ENCODE measurements at regions of chr12 and their contacts with region 1.

Region 1: GRCh38 chr12:62181481-62181880 is 78.7 kb upstream of the USP15 start:
- DNase-seq: no peak
- H3K4me3 ChIP-seq: no peak overlapping the region
- H3K27ac ChIP-seq: no peak overlapping the region
- H3K4me1 ChIP-seq: no peaks in the 10 kb centered on the region
- H3K27me3 ChIP-seq: no peaks in the 10 kb centered on the region
- CTCF ChIP-seq: no peak
- EP300 ChIP-seq: no peak
- RAD21 ChIP-seq: no peak

Region 2: DNA sequence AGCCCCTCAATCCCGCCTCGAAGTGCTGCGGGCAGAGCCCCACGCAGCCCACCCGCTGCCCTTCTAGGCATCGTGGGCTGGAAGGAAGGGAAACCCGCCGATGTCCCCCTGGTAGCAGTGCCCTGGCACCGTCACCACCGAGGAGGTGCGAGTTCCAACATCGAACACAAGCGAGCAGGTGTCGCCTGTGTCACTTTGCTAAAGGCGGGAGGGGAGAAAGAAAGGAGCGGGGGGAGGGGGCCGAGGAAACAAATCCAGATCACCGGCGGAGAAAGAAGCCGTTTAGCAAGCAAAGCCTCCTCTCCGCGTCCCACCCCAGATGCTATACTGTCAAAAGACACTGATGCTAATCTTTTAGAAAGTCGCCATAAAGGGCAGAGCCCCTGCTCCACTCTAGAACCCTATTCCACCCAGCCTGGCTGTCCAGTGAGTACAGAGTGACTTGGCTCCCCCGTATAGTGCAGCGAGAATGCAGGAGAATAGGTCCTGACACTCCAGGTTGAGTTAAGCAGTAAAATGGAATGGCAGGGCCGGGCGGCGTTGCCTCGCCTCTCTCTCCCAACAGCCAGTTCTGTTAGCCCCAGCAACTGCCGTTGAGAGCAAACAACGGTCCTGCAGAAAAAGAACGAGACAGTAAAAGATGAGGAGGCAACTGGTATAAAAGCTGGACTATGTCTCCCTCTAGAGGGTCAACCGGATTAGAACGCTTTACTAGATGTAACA is 10.9 kb after region 1 on chr12:
- CTCF ChIA-PET with region 1: interaction called, 12 read pairs
- POLR2A ChIA-PET with region 1: no interaction called
- DNase-seq: peak; percentile 77
- H3K4me3 ChIP-seq: peak overlapping the region; percentile 33 to 54
- H3K27ac ChIP-seq: no peak overlapping the region
- H3K4me1 ChIP-seq: peaks cover 0 to 7% of the 10 kb centered on the region in 2 experiments; a peak in 1 of 4 replicates
- H3K27me3 ChIP-seq: peaks cover 31% of the 10 kb centered on the region
- CTCF ChIP-seq: peak; percentile 80
- EP300 ChIP-seq: no peak
- RAD21 ChIP-seq: peak; percentile 90